PC-9 (cell line): ENCODE measurements at regions of chr1 and their contacts with region 1.

Region 1: DNA sequence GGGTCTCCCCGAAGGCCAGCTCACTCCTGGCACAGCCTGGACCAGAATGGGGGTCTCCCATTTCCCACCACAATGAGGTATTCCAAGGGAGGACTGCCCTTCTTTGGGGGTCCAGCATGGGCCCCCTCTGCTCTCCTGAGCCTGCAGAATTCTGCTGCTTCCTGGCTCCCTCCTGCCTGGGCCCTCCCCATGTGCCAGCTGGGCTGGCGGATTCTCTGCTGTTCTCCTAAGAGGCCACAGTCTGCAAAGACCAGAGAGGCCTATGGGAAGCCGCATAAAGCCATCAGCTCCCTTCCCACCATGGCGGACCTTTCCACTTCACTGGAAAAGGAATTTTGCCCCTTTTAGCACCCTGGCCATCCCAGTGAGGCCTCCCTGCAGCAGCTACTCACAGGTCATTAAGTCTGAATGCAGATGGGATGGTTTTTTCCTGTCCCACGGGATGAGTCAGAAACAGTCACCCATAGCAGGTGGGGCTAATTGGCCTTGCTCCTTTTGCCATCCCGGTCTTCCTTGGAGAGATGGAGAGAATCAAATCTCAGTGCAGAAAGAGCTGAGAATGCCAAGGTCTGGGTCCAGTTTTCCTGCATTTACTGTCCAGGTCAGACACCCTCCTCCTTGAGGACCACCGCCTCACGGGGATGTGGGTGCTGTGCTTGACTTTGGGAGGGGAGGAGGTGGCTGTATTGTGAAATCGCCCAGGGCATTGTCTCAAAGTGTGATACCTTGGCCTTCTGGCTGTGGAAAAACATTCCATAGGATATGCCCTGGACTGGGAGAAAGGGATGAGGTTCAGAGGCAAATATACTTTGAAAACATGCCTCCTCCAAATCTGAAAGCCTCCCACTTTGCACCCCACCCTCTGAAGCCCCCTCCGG is 23.2 kb downstream of the MYBPH start:
- DNase-seq: peak; percentile 60 to 91
- H3K4me3 ChIP-seq: peak overlapping the region; percentile 36; the same call in 1 of the 2 replicates
- H3K27ac ChIP-seq: peak overlapping the region; percentile 83
- H3K4me1 ChIP-seq: peaks cover 65% of the 10 kb centered on the region
- H3K27me3 ChIP-seq: no peaks in the 10 kb centered on the region
- CTCF ChIP-seq: no peak

Region 2: GRCh38 chr1:203133970-203134725 is 18.2 kb before region 1 on chr1:
- CTCF ChIA-PET with region 1: interaction called, 3 read pairs
- POLR2A ChIA-PET with region 1: no interaction called
- intact Hi-C with region 1: loop called (anchors 2 kb)
- DNase-seq: peak; percentile 34 to 75
- H3K4me3 ChIP-seq: no peak overlapping the region
- H3K27ac ChIP-seq: peak overlapping the region; percentile 66
- H3K4me1 ChIP-seq: peaks cover 73% of the 10 kb centered on the region
- H3K27me3 ChIP-seq: no peaks in the 10 kb centered on the region
- CTCF ChIP-seq: no peak